ENCODE measurements at regions of chr12 and their contacts with region 1.

Region 1: DNA sequence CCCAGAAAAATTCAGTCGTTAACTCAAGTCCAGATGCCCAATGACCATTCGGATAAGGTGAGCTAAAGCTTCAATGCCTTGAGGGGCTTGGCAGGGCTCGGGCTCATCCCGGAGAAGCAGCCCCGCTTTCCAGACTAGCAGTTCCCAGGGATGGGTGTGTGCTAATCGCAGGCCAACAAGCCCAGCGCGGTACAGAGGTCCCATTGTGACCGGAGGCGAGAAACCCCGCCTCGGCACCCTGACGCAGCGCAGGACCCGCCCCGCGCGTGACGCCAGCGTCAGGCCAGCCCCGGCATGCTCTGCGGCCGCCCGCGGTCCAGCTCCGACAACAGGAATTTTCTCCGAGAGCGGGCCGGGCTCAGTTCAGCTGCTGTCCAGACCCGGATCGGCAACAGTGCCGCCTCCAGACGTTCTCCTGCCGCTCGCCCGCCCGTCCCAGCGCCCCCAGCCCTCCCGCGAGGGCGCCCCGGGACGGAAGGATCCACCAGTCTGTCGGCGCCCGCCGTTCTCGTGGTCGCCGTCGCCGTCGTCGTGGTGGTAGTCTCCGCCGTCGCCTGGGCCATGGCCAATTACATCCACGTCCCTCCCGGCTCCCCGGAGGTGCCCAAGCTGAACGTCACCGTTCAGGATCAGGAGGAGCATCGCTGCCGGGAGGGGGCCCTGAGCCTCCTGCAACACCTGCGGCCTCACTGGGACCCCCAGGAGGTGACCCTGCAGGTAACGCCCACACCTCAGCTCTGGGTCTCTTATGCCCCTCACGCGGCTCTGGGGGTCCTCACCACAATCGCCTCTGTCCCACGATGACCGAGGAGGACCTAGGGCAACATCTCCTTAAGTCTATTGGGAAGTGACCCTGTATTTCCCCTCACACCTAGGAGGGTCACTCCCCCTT is at the start of gene ETNK1:
- DNase-seq: peak; percentile 95
- H3K4me3 ChIP-seq: peak within 1 kb of the TSS; percentile 94
- H3K27ac ChIP-seq: peak within 1 kb of the TSS; percentile 95
- H3K4me1 ChIP-seq: peaks cover 57% of the 10 kb centered on the region
- H3K27me3 ChIP-seq: no peaks in the 10 kb centered on the region
- CTCF ChIP-seq: peak; percentile 12
- total RNA-seq, gene ETNK1: 13.9 TPM

Region 2: GRCh38 chr12:22459838-22460490 is 165.2 kb before region 1 on chr12:
- intact Hi-C with region 1: no loop called
- DNase-seq: no peak
- H3K4me3 ChIP-seq: no peak overlapping the region
- H3K27ac ChIP-seq: no peak overlapping the region
- H3K4me1 ChIP-seq: no peaks in the 10 kb centered on the region
- H3K27me3 ChIP-seq: no peaks in the 10 kb centered on the region
- CTCF ChIP-seq: peak; percentile 71

Region 3: DNA sequence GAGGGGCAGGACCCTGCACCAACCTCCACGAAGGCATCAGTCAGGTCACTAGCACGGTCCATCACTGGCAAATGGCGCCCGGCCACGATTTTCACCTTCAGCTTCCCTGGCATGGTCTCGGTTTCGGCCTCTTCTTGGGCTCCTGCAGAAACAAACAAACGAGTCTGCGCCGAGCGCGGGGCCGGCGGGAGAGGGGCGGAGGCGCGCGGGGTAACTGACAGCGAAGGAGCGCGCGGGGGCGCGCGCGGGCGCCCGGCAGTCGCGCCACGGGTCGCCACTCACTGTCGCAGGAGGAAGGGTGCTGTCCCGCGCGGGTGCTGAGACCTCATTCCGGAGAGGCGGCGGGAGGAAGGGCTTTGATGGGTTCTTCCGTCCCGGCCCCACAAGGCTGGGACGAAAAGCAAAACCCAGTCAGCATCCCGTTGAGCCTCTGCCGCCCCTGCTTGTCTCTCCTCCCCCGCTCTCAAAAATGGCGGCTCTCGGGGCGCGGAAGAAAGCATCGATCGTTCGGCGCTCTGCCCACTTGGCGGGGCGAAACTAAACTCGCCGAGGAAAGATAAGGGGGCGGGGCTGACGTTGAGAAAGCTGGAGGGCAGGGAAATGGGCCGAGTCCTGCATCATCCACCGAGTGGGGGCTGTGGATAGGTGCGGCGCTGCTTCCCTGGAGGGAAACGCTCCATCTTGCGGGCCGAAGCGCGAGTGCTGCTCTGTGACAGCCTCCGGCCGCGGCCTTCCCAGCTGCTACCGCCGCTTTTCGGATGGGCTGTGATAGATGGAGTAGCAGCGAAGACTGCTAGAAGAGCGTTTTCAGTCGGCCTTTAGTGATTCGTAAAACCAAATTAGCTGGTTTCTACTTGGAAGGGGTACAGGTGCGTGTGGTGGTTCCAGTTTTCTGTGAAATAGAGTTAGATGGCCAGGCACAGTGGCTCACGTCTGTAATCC is 80.8 kb before region 1 on chr12 and contains the start of gene C2CD5:
- intact Hi-C with region 1: loop called (anchors 5 kb)
- DNase-seq: peak; percentile 97
- H3K4me3 ChIP-seq: peak within 1 kb of the TSS; percentile 94
- H3K27ac ChIP-seq: peak within 1 kb of the TSS; percentile 98
- H3K4me1 ChIP-seq: peaks cover 51% of the 10 kb centered on the region
- H3K27me3 ChIP-seq: no peaks in the 10 kb centered on the region
- CTCF ChIP-seq: peak; percentile 51
- total RNA-seq, gene C2CD5: 22.5 TPM

Region 4: GRCh38 chr12:22712083-22712482 is 87.0 kb after region 1 on chr12:
- intact Hi-C with region 1: no loop called
- DNase-seq: no peak
- H3K4me3 ChIP-seq: no peak overlapping the region
- H3K27ac ChIP-seq: no peak overlapping the region
- H3K4me1 ChIP-seq: no peaks in the 10 kb centered on the region
- H3K27me3 ChIP-seq: no peaks in the 10 kb centered on the region
- CTCF ChIP-seq: no peak